AG04449 (cell line): ENCODE measurements at regions of chr11 and their contacts with region 1.

Region 1: GRCh38 chr11:65988791-65989592 is 13.0 kb downstream of the EIF1AD start:
- DNase-seq: peak; percentile 79
- H3K4me3 ChIP-seq: no peak overlapping the region
- CTCF ChIP-seq: peak; percentile 94

Region 2: GRCh38 chr11:65973439-65974110 is 15.4 kb before region 1 on chr11:
- CTCF ChIA-PET with region 1: interaction called, 21 read pairs
- POLR2A ChIA-PET with region 1: interaction called, 3 read pairs
- DNase-seq: no peak
- H3K4me3 ChIP-seq: no peak overlapping the region
- CTCF ChIP-seq: no peak

Region 3: DNA sequence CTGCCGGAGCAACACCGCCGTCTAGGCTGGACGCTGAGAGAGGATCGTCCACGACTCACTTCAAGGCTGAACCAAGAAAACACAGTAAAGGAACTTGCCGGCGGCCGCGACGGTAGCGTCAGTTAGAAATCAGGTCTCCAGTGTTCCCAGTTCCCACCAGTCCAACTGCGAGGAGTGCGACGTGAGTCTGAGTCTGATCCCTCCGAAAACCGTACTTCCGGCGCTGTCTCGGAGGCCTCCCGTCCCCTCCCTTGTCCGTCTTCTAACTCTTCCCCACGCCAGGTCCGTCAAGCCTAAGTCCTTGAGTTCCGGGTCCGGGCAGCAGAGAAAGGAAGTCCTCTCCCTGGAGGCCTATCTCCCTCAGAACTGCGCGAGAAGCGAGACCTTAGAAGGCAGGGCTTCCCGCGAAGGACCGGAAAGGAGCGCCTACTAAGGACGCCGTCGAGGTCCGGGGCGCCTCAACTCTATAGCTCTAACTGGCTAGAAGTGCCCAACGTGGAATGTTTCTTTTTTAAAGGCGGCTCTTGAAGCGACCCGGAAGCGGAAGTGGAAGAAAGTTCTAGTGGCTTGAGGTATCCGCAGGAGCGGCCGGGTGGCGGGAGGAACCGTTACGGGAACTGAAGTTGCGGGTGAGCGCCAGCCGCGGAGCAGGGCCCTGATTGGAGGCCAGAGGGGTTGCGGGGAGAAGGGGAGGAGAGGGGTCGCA is 13.1 kb after region 1 on chr11 and contains the starts of genes BANF1 and EIF1AD:
- CTCF ChIA-PET with region 1: interaction called, 14 read pairs
- POLR2A ChIA-PET with region 1: interaction called, 3 read pairs
- DNase-seq: peak; percentile 88
- H3K4me3 ChIP-seq: peak within 1 kb of the TSS; percentile 94
- CTCF ChIP-seq: no peak